ENCODE measurements at regions of chr6 and their contacts with region 1.

Region 1: GRCh38 chr6:34656378-34657036 is 40.1 kb downstream of the ILRUN start:
- DNase-seq: peak; percentile 41
- H3K4me3 Mint-ChIP-seq: peak overlapping the region; percentile 75
- H3K27ac Mint-ChIP-seq: peak overlapping the region; percentile 89
- H3K4me1 Mint-ChIP-seq: peaks cover 19% of the 10 kb centered on the region
- H3K27me3 Mint-ChIP-seq: no peaks in the 10 kb centered on the region
- CTCF ChIP-seq: no peak

Region 2: DNA sequence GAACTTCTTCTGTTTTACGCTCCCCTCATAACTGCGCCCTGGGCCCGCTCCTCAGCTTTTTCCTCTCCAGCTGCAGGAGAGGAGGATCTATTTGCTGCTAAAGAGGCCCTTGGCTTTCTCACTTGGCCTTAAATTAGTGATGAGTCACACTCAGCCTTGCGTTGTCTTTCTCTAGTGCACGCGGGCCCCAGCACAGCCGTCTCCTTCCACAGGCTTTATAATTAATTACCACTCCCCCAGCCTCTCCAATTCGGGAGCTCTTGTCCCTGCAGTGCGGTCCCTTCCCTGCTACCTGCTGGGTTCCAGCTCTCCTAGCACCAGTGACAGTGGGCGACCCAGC is 165.4 kb before region 1 on chr6:
- CTCF ChIA-PET with region 1: no interaction called
- POLR2A ChIA-PET with region 1: no interaction called
- intact Hi-C with region 1: no loop called
- DNase-seq: peak; percentile 20
- H3K4me3 Mint-ChIP-seq: no peak overlapping the region
- H3K27ac Mint-ChIP-seq: no peak overlapping the region
- H3K4me1 Mint-ChIP-seq: no peaks in the 10 kb centered on the region
- H3K27me3 Mint-ChIP-seq: no peaks in the 10 kb centered on the region
- CTCF ChIP-seq: no peak

Region 3: GRCh38 chr6:34602318-34603111 is 54.0 kb before region 1 on chr6:
- CTCF ChIA-PET with region 1: no interaction called
- POLR2A ChIA-PET with region 1: no interaction called
- intact Hi-C with region 1: no loop called
- DNase-seq: no peak
- H3K4me3 Mint-ChIP-seq: no peak overlapping the region
- H3K27ac Mint-ChIP-seq: no peak overlapping the region
- H3K4me1 Mint-ChIP-seq: peaks cover 27% of the 10 kb centered on the region
- H3K27me3 Mint-ChIP-seq: no peaks in the 10 kb centered on the region
- CTCF ChIP-seq: no peak

Region 4: DNA sequence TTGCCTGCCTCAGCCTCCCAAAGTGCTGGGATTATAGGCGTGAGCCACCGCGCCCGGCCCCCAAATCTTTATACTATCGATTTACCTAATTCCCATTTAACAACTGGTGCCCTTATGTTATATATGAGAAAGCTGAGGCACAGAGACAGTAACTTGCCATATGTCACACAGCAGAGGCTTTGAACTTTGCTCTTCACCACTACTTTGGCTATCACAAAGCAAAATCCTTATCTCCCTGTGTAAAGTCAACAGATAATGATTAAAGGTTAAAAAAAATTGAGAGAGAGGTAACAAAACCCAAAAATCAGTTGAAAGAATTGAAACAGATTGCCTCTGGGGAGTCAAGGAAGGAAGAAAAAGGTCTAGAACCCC is 17.7 kb after region 1 on chr6:
- CTCF ChIA-PET with region 1: interaction called, 7 read pairs
- POLR2A ChIA-PET with region 1: interaction called, 14 read pairs
- intact Hi-C with region 1: no loop called
- DNase-seq: no peak
- H3K4me3 Mint-ChIP-seq: no peak overlapping the region
- H3K27ac Mint-ChIP-seq: no peak overlapping the region
- H3K4me1 Mint-ChIP-seq: peaks cover 27% of the 10 kb centered on the region
- H3K27me3 Mint-ChIP-seq: no peaks in the 10 kb centered on the region
- CTCF ChIP-seq: no peak

Region 5: GRCh38 chr6:34757687-34758274 is 101.3 kb after region 1 on chr6:
- CTCF ChIA-PET with region 1: interaction called, 5 read pairs
- POLR2A ChIA-PET with region 1: interaction called, 31 read pairs
- intact Hi-C with region 1: loop called (anchors 10 kb)
- DNase-seq: no peak
- H3K4me3 Mint-ChIP-seq: no peak overlapping the region
- H3K27ac Mint-ChIP-seq: no peak overlapping the region
- H3K4me1 Mint-ChIP-seq: peaks cover 6% of the 10 kb centered on the region
- H3K27me3 Mint-ChIP-seq: no peaks in the 10 kb centered on the region
- CTCF ChIP-seq: no peak

Measured in MCF 10A (cell line).